ENCODE measurements at regions of chr14 and their contacts with region 1.

Region 1: GRCh38 chr14:34982417-34983147 is at the start of gene SRP54:
- DNase-seq: peak; percentile 97 to 99
- H3K4me3 ChIP-seq: peak within 1 kb of the TSS; percentile 72 to 89
- H3K27ac ChIP-seq: peak within 1 kb of the TSS; percentile 93 to 99
- H3K4me1 ChIP-seq: peaks cover 0 to 42% (median 26%) of the 10 kb centered on the region in 4 donors
- H3K27me3 ChIP-seq: no peaks in the 10 kb centered on the region
- CTCF ChIP-seq: no peak

Region 2: GRCh38 chr14:34461334-34462131 is 521.0 kb before region 1 on chr14:
- intact Hi-C with region 1: loop called (anchors 5 kb)
- DNase-seq: peak; percentile 63 to 77
- H3K4me3 ChIP-seq: peak overlapping the region; percentile 69 to 94
- H3K27ac ChIP-seq: peak overlapping the region; percentile 91 to 95
- H3K4me1 ChIP-seq: peaks cover 0 to 24% (median 11%) of the 10 kb centered on the region in 4 donors
- H3K27me3 ChIP-seq: no peaks in the 10 kb centered on the region
- CTCF ChIP-seq: no peak

Region 3: DNA sequence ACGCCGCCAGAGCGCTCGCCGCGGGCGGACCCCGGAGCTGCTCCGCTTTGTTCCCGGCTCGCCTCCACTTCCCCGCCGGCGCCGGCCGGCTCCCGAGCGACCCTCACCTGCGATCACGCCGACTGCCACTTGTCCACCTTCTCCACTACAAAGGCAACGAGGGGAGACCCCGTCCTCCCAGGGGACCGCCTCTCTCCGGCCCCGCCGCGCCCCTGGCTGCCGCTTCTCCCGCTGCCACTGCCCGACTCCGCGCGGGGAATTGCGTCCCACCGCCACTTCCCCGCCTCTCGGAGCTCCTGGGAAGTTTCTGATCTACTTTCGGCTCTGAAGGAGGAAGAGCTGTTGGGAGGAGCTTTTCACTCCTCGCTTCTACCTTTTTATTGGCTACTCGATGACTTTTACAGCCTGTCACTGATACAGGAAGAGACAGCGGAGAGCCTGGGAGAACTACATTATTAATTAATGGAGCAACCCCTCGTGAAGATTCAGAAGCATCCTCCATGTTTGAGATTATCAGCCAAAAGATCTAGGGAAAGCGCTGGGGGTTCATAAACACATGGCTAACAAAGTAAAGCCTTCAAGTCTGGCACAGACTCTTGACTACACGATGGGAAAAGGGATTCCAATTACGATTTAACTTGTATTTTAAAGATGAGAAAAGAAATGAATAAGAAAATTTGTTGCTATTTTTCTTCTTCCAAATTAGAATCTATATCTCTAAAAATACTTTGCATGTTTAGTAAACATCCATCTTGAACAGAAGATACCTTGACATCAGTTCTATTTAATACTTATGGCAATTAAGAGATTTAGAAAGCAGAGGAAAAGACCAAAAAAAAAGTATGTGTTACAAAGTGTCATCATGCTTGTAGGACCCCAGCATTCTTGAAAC is 107.3 kb before region 1 on chr14 and contains the start of gene BAZ1A:
- intact Hi-C with region 1: loop called (anchors 2 kb)
- DNase-seq: peak; percentile 57 to 82
- H3K4me3 ChIP-seq: peak within 1 kb of the TSS; percentile 72 to 92
- H3K27ac ChIP-seq: peak within 1 kb of the TSS; percentile 98 to 99
- H3K4me1 ChIP-seq: peaks cover 0 to 8% (median 3%) of the 10 kb centered on the region in 4 donors
- H3K27me3 ChIP-seq: no peaks in the 10 kb centered on the region
- CTCF ChIP-seq: peak; percentile 21 to 28

Region 4: DNA sequence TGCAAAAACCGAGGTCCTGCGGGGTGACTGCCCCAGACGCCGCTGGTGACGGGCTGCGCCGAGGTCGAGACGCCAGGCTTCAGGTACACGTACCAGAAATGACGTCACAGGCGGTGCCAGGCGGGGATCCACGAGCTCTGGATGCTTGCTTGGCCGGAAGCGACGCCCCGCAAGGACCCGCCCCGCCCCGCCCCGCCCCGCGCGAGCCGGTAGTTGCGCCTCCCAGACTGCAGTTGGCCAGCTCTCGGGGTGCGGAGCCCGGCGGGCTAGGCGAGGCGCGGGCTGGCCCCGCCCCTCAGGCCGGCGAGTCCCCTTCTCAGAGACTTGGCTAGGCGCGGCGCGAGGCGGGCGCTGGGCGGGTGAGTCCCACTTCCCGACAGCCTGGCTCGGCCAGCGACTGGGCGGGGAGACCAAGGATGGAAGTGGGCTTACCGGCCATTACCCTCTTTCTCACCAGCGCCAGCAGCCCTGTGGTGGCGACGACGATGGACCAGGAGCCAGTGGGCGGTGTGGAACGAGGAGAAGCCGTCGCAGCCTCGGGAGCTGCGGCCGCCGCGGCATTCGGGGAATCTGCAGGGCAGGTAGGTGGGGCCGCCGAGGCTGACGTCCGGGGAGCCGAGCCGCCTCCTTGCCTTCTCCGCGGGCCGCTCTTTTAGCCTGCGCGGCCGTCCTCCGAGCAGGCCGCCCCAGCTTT is 63.6 kb after region 1 on chr14 and contains the start of gene FAM177A1:
- intact Hi-C with region 1: loop called (anchors 5 kb)
- DNase-seq: peak; percentile 97 to 99
- H3K4me3 ChIP-seq: peak within 1 kb of the TSS; percentile 70 to 82
- H3K27ac ChIP-seq: peak within 1 kb of the TSS; percentile 96 to 97
- H3K4me1 ChIP-seq: peaks cover 0 to 47% (median 21%) of the 10 kb centered on the region in 4 donors
- H3K27me3 ChIP-seq: no peaks in the 10 kb centered on the region
- CTCF ChIP-seq: no peak

Region 5: DNA sequence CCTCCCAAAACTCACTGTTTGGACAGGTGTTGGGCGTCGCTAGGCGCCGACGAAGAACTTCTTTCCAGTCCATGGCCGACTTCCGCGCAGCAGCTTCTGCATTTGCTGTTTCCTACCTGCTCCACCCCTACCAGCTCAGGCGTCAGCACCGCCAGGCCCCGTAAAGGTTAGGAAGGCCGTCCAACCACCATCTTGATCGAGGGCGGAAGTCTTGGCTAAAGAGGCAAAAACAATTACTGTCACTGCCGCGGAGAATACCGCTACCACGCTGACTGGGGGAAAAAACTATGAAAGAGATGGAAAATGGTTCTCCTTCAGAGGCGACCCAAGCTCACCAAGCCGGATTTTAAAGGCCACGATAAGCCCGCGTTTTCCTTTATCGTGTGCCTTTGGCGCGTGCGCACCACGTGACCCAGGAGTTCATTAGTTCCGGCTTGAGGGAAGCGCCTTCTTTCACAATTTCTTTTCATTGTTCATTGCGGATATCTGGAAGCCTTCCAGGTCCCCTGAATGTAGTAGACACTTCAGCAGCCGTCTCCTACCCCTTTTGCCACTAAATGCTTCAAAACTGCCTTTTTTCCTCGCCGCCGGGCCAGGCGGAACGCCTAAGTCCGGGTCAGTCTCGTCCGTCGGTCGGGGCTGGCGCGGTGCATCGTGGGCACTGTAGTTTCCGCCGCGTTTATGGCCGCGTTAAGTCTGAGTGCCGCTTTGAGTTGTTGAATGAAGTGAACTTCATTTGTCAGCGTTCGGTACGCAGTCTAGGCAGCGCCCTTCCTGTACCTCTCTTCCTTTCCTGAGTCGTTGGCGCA is 139.5 kb after region 1 on chr14 and contains the starts of genes PPP2R3C and PRORP:
- intact Hi-C with region 1: loop called (anchors 5 kb)
- DNase-seq: peak; percentile 95 to 96
- H3K4me3 ChIP-seq: peak within 1 kb of the TSS; percentile 61 to 66
- H3K27ac ChIP-seq: peak within 1 kb of the TSS; percentile 85 to 93
- H3K4me1 ChIP-seq: peaks cover 3 to 49% (median 25%) of the 10 kb centered on the region in 4 donors
- H3K27me3 ChIP-seq: no peaks in the 10 kb centered on the region
- CTCF ChIP-seq: no peak